ENCODE measurements at regions of chr12 and their contacts with region 1.

Region 1: DNA sequence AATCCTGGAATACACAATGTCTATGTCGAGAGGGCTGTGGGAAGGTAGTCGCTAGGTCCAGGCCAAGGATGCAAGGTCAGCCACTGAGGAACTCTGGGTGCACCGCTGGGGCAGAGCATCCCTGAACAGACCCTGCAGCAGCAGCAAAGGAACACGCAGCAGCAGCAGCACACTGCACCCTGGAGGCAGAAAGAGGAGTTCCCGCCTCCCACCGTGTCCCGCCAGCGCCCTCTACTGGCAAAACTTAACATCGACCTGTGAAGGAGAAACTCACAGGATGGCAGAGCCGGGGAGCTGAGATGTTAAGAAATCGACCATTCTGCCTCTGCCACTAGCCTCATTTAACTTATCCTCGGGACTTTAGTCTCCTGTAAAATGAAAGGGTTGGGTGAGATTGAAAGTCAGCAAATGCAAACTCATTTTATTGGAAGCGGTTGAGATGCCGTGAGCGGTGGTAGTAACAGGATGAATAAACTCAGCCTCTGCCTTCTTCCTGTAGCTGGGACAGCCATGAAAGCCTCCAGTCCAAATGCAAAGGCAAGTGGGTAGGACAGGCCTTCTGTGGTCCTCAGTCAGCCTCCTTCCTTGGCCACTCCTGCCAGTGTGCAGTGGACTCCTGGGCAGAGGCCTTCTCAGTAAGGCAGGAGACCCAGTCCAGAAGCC is 45.6 kb downstream of the STAB2 start:
- DNase-seq: peak; percentile 79
- H3K4me3 ChIP-seq: peak overlapping the region in 1 of 2 experiments; percentile 55; a peak in 1 of 4 replicates
- H3K27ac ChIP-seq: no peak overlapping the region
- H3K4me1 ChIP-seq: no peaks in the 10 kb centered on the region; a peak in 1 of 4 replicates
- H3K27me3 ChIP-seq: no peaks in the 10 kb centered on the region
- CTCF ChIP-seq: peak; percentile 82
- EP300 ChIP-seq: no peak
- RAD21 ChIP-seq: peak; percentile 75

Region 2: GRCh38 chr12:103422746-103423515 is 209.8 kb before region 1 on chr12:
- CTCF ChIA-PET with region 1: no interaction called
- POLR2A ChIA-PET with region 1: no interaction called
- DNase-seq: peak; percentile 65
- H3K4me3 ChIP-seq: no peak overlapping the region
- H3K27ac ChIP-seq: peak overlapping the region in 1 of 2 experiments; percentile 78; a peak in 2 of 4 replicates
- H3K4me1 ChIP-seq: peaks cover 0 to 8% of the 10 kb centered on the region in 2 experiments; a peak in 2 of 4 replicates
- H3K27me3 ChIP-seq: no peaks in the 10 kb centered on the region
- CTCF ChIP-seq: no peak
- EP300 ChIP-seq: peak in 1 of 2 experiments; percentile 92; a peak in 2 of 4 replicates
- RAD21 ChIP-seq: peak; percentile 21; the same call in 1 of the 2 replicates

Region 3: DNA sequence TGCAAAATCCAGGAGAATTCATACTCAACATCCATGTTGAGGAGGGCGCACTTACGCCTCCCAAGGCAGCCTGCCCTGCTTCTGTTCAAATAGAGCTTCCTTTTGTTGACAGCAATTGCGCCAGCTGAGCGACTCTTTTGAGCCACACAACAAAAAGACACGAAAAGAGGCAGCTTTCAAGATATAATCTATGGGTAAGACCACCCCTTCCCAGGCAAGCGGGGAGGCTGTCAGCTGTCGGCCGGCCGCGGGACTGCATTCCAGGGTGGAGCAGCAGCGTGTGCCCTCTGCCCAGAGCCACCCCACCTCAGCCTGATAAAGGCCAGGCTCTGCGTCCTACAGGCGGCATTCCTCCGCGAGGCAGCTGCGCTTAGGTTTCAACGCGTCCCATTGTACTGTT is 61.4 kb before region 1 on chr12:
- CTCF ChIA-PET with region 1: interaction called, 38 read pairs
- POLR2A ChIA-PET with region 1: no interaction called
- DNase-seq: peak; percentile 41
- H3K4me3 ChIP-seq: no peak overlapping the region
- H3K27ac ChIP-seq: no peak overlapping the region
- H3K4me1 ChIP-seq: peaks cover 0 to 7% of the 10 kb centered on the region in 2 experiments; a peak in 1 of 4 replicates
- H3K27me3 ChIP-seq: no peaks in the 10 kb centered on the region; the same call in 1 of the 2 replicates
- CTCF ChIP-seq: no peak; the same call in 1 of the 2 replicates
- EP300 ChIP-seq: no peak
- RAD21 ChIP-seq: no peak

Region 4: GRCh38 chr12:103583004-103583403 is 49.7 kb before region 1 on chr12:
- CTCF ChIA-PET with region 1: interaction called, 22 read pairs
- POLR2A ChIA-PET with region 1: no interaction called
- DNase-seq: no peak
- H3K4me3 ChIP-seq: no peak overlapping the region
- H3K27ac ChIP-seq: no peak overlapping the region
- H3K4me1 ChIP-seq: no peaks in the 10 kb centered on the region
- H3K27me3 ChIP-seq: no peaks in the 10 kb centered on the region
- CTCF ChIP-seq: no peak
- EP300 ChIP-seq: no peak
- RAD21 ChIP-seq: no peak

Region 5: DNA sequence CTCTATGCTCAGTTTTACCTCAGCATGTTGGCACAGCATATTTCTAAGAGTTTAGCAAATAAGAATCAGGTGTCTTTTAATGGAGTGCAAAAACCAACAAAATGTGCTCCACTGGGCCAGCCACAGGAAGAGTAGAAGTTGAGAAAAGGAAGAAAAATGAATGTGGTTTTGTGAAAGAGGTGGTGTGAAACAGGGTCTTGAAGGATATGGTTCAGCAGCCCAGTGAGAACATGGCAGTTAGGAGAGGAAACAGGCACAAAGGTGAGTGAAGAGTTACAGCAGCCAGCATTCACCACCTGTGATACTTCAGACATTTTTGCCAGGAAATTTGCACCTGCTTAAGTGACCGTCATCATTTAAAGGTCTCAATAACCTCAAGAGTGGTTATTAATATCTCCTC is 43.2 kb before region 1 on chr12:
- CTCF ChIA-PET with region 1: interaction called, 12 read pairs
- POLR2A ChIA-PET with region 1: no interaction called
- DNase-seq: no peak
- H3K4me3 ChIP-seq: no peak overlapping the region
- H3K27ac ChIP-seq: no peak overlapping the region
- H3K4me1 ChIP-seq: no peaks in the 10 kb centered on the region
- H3K27me3 ChIP-seq: no peaks in the 10 kb centered on the region
- CTCF ChIP-seq: no peak
- EP300 ChIP-seq: no peak
- RAD21 ChIP-seq: no peak

Region 6: GRCh38 chr12:103600967-103601728 is 31.5 kb before region 1 on chr12:
- CTCF ChIA-PET with region 1: interaction called, 14 read pairs
- POLR2A ChIA-PET with region 1: no interaction called
- DNase-seq: no peak
- H3K4me3 ChIP-seq: no peak overlapping the region
- H3K27ac ChIP-seq: no peak overlapping the region
- H3K4me1 ChIP-seq: no peaks in the 10 kb centered on the region
- H3K27me3 ChIP-seq: no peaks in the 10 kb centered on the region; the same call in 1 of the 2 replicates
- CTCF ChIP-seq: no peak
- EP300 ChIP-seq: no peak
- RAD21 ChIP-seq: no peak

Region 7: GRCh38 chr12:103680591-103681141 is 48.0 kb after region 1 on chr12:
- CTCF ChIA-PET with region 1: interaction called, 18 read pairs
- POLR2A ChIA-PET with region 1: no interaction called
- DNase-seq: peak; percentile 72
- H3K4me3 ChIP-seq: no peak overlapping the region
- H3K27ac ChIP-seq: peak overlapping the region in 1 of 2 experiments; percentile 89; a peak in 2 of 4 replicates
- H3K4me1 ChIP-seq: peaks cover 0 to 25% of the 10 kb centered on the region in 2 experiments; a peak in 2 of 4 replicates
- H3K27me3 ChIP-seq: no peaks in the 10 kb centered on the region; the same call in 1 of the 2 replicates
- CTCF ChIP-seq: no peak
- EP300 ChIP-seq: no peak; a peak in 1 of 4 replicates
- RAD21 ChIP-seq: 0 out of 2 replicates have a peak, but pooled peaks have one; percentile 3